Activated B cell treated with CpG ODN at 0.5 μM for 24 hours (primary cell): ENCODE measurements at regions of chr19 and their contacts with region 1.

Region 1: DNA sequence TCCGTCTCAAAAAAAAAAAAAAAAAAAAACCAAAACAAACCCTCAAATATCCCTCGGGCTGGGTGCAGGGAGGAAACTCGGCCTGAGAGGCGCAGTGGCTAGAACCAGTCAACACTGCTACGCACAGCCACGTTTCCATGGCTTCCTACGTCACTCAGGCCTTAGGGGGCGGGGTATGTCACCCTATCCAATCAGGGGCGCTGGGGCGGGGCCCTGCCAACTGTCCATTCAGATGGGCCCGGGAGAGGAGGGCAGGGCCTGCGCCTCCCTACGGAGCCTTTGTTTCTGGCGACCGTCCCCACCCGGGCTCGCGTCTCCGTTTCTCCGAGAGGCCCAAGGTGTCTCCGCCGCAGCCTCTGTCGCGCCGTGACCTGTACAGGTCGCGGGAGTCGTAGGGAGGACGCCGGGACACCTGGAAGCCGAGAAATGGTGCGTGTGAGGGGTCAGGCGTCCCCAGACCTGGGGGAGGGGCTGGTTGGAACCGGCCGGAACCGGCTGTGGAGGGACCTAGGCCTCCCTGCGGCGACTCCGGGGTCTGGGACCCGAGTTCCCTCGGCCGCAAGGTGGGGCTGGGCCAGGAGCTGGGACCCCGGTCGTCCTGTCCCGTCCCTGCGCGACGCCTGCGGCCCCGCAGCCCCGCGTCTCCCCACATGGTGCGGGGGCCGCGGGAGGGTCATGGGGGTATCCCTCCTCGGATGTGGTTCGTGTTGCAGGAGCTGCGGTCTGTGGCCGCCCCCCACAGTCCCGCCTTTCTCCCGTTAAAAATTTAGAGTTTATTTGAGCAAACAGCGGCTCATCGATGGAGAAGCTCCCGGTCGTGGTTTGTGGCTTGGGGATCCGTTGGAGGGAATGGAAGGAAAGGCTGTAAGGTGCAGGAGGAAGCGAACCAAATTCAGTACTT is at the start of gene ZNF627:
- DNase-seq: peak; percentile 91
- ATAC-seq: peak; percentile 99
- H3K4me3 Mint-ChIP-seq: peak within 1 kb of the TSS; percentile 88
- H3K27ac Mint-ChIP-seq: peak within 1 kb of the TSS; percentile 87
- H3K4me1 Mint-ChIP-seq: peaks cover 47% of the 10 kb centered on the region
- H3K27me3 Mint-ChIP-seq: no peaks in the 10 kb centered on the region
- CTCF ChIP-seq: no peak
- total RNA-seq, gene ZNF627: 17.0 and 17.6 TPM in 2 replicates

Region 2: DNA sequence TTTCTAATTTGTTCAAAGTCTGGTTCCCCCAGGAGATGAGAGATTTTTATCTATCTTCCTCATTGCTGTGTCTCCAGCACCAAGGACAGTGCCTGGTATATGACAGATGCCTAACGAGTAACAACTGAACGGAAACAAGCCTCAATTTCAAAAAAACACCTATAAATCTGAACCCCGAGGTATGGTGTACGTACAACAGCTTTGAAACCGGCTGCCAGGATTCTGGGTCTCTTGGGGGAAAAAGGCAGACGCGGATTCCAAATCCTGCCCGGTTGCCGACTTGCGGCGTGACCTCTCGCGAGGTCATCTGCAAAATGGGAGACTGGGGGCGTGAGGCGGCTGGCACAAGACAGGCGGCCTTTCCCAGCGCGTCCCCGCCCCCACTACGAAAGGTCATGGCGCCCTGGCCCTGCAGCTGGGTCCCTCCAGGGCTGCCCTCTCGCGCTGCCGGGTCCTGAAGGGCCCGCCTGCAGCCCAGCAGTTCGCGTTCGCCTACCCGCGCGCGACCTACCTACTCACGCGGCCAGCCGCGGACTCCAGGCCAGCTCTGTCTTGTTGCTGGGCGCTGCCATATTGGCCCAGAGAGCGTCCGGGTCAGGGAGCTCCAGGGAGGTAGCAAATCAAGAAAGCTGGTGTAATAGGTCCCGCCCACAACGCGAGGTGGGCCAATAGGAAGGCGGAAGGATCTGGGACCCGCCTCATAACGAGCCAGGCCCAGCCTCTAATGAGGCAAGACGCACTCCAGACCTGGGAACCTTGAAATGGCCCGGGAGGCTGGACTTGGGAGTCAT is 68.7 kb before region 1 on chr19 and contains the start of gene ECSIT:
- CTCF ChIA-PET with region 1: no interaction called
- POLR2A ChIA-PET with region 1: interaction called, 3 read pairs
- intact Hi-C with region 1: loop called (anchors 2 kb)
- DNase-seq: peak; percentile 81
- ATAC-seq: peak; percentile 99
- H3K4me3 Mint-ChIP-seq: peak within 1 kb of the TSS; percentile 93
- H3K27ac Mint-ChIP-seq: peak within 1 kb of the TSS; percentile 89
- H3K4me1 Mint-ChIP-seq: peaks cover 13% of the 10 kb centered on the region
- H3K27me3 Mint-ChIP-seq: no peaks in the 10 kb centered on the region
- CTCF ChIP-seq: no peak
- total RNA-seq, gene ECSIT: 49.3 and 54.2 TPM in 2 replicates

Region 3: GRCh38 chr19:11581740-11582139 is 15.7 kb before region 1 on chr19:
- CTCF ChIA-PET with region 1: no interaction called
- POLR2A ChIA-PET with region 1: interaction called, 11 read pairs
- intact Hi-C with region 1: no loop called
- DNase-seq: peak; percentile 72
- ATAC-seq: peak; percentile 88
- H3K4me3 Mint-ChIP-seq: peak overlapping the region; percentile 73
- H3K27ac Mint-ChIP-seq: peak overlapping the region; percentile 81
- H3K4me1 Mint-ChIP-seq: peaks cover 86% of the 10 kb centered on the region
- H3K27me3 Mint-ChIP-seq: no peaks in the 10 kb centered on the region
- CTCF ChIP-seq: no peak

Region 4: DNA sequence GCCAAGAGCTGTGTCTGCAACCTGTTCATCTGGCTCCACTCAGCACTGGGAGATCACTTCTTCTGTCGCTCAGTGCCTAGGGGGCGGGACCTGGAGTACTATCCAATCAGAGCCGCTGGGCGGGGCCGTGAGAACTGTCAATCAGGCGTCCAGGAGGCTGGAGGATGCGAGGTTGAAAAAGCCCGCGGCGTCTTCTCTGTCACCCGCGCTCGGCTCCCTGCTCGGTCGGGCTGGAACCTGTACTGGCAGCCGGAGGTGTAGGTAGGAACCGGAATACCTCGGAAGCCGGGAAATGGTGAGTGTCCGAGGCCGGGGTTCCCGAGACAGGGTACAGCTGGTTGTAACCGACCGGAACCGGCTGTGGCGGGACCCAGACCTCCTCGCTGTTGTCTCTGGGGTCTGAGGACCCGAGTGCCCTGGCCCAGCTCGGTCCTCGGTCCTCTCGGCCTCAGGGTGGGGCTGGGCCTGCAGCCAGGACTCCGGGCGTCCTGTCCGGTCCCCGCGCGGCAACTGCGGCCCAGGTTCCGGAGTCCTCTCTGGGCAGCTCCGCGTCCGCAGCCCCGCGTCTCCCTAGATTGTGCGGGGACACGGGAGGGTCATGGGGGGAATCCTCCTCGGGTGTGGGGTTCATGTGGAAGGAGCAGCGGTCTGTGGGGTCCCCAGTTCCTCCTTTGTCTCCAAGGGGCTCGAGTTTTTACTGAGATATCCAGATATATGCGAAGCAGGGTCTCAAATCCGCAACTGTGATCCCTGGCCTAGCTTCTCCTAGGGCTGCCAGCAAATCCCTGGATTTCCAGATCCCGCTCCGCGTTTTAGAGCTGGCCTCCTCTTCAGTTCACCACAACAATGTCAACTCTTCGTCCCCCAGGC is 42.4 kb after region 1 on chr19:
- CTCF ChIA-PET with region 1: no interaction called
- POLR2A ChIA-PET with region 1: interaction called, 4 read pairs
- intact Hi-C with region 1: loop called (anchors 1 kb)
- DNase-seq: peak; percentile 87
- ATAC-seq: peak; percentile 100
- H3K4me3 Mint-ChIP-seq: peak overlapping the region; percentile 77
- H3K27ac Mint-ChIP-seq: no peak overlapping the region
- H3K4me1 Mint-ChIP-seq: peaks cover 5% of the 10 kb centered on the region
- H3K27me3 Mint-ChIP-seq: peaks cover 5% of the 10 kb centered on the region
- CTCF ChIP-seq: no peak

Region 5: DNA sequence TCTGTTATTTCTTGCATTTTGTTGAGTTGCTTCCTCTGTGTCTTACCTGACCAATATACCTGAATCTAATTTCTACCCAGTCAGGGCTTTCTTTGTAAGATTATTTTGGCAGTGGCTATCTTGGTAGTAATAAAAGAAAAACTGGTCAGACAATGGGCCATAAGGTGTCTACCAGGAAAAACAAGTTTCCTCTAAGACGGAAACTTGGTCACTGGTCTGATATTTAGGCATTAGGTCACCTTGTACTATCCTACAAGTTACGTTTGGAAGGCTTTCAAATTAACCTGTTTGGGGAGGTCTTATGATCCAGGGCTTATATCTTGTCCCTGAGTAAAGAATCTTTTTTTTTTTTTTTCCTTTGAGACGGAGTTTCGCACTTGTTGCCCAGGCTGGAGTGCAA is 132.1 kb after region 1 on chr19:
- CTCF ChIA-PET with region 1: no interaction called
- POLR2A ChIA-PET with region 1: no interaction called
- intact Hi-C with region 1: no loop called
- DNase-seq: no peak
- ATAC-seq: no peak
- H3K4me3 Mint-ChIP-seq: no peak overlapping the region
- H3K27ac Mint-ChIP-seq: no peak overlapping the region
- H3K4me1 Mint-ChIP-seq: no peaks in the 10 kb centered on the region
- H3K27me3 Mint-ChIP-seq: no peaks in the 10 kb centered on the region
- CTCF ChIP-seq: no peak

Region 6: GRCh38 chr19:11745869-11746268 is 148.4 kb after region 1 on chr19:
- CTCF ChIA-PET with region 1: no interaction called
- POLR2A ChIA-PET with region 1: no interaction called
- intact Hi-C with region 1: no loop called
- DNase-seq: no peak
- ATAC-seq: no peak
- H3K4me3 Mint-ChIP-seq: no peak overlapping the region
- H3K27ac Mint-ChIP-seq: no peak overlapping the region
- H3K4me1 Mint-ChIP-seq: no peaks in the 10 kb centered on the region
- H3K27me3 Mint-ChIP-seq: peaks cover 5% of the 10 kb centered on the region
- CTCF ChIP-seq: no peak

Region 7: DNA sequence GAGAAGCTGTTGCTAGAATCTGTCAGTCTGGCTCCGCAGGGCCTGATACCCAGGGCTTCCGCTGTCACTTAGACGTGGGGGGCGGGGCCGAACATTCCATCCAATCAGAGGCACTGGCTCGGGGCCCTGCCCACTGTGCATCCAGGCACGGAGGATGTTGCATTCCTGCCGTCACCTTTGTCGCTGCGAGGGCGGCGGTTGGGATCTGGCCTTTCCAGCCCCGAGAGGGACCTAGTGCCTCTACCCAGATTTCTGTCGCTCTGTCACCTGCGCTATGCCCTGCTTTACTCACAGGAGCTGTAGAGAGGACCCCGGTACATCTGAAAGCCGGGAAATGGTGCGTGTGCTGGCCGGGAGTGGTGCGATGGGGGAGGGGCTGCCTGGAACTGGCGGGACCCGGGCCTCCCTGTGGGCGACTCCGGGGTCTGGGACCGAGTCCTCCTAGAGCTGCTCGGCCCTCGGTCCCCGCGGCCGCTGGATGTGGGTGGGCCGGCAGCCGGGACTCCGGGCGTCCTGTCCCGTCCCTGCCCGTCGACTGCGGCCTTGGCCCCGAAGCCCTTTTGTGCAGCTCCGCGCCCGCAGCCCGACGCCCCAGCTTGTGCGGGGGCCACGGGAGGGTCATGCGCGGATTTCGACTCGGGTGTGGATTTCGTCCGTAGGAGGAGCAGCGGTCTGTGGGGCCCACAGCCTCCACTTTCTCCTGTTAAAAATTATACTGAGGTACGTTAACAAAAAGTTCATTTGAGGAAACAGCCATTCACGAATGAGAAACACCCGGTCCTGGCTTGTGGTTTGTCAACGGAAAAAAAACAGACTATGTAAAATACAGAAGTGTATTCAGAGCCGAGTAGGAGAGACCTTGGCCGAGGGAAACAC is 251.4 kb after region 1 on chr19 and contains the start of gene ZNF439:
- CTCF ChIA-PET with region 1: no interaction called
- POLR2A ChIA-PET with region 1: no interaction called
- intact Hi-C with region 1: loop called (anchors 2 kb)
- DNase-seq: peak; percentile 87
- ATAC-seq: peak; percentile 99
- H3K4me3 Mint-ChIP-seq: peak within 1 kb of the TSS; percentile 94
- H3K27ac Mint-ChIP-seq: peak within 1 kb of the TSS; percentile 92
- H3K4me1 Mint-ChIP-seq: peaks cover 36% of the 10 kb centered on the region
- H3K27me3 Mint-ChIP-seq: no peaks in the 10 kb centered on the region
- CTCF ChIP-seq: no peak
- total RNA-seq, gene ZNF439: 19.9 and 22.8 TPM in 2 replicates